CD8-positive, alpha-beta T cell (primary cell): ENCODE measurements at regions of chr11 and their contacts with region 1.

Region 1: DNA sequence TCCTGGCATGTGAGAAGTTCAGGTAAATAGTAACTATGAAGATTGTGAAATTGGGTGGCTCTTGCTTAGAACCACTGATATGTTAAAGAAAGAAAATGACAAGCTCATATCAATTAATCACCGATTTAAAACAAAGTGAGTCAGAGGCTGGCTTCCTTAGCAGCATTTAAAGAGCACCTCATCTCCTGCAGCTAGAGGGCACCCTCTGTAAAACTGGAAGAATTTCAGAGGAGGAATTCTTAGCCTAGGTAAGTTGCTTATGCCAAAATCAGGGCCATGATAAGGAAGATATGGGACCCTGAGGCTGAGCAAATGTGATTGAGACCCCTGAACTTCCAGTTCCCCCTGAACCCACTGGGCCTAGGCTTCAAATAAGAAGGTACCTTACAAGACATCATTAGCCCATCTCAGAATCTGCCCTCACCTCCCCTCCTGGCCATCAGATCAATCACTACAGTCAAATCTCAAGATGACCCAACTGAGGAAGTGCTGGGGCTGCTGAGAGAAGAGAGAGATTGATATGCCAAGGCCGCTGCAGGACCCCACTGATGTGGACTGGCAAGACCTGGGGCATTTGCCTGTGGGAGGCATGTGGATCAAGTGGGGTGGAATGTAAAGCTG is 8.6 kb upstream of the CD3E start:
- DNase-seq: peak in 7 of 9 experiments; percentile 22 to 79 (median 59)
- ATAC-seq: peak; percentile 81
- H3K4me3 ChIP-seq: no peak overlapping the region
- H3K4me3 Mint-ChIP-seq: no peak overlapping the region
- H3K27ac ChIP-seq: peak overlapping the region in 1 of 2 experiments; percentile 52
- H3K27ac Mint-ChIP-seq: peak overlapping the region; percentile 46
- H3K4me1 ChIP-seq: peaks cover 7% of the 10 kb centered on the region
- H3K4me1 Mint-ChIP-seq: peaks cover 27% of the 10 kb centered on the region
- H3K27me3 ChIP-seq: no peaks in the 10 kb centered on the region
- H3K27me3 Mint-ChIP-seq: no peaks in the 10 kb centered on the region
- CTCF ChIP-seq: peak; percentile 64

Region 2: DNA sequence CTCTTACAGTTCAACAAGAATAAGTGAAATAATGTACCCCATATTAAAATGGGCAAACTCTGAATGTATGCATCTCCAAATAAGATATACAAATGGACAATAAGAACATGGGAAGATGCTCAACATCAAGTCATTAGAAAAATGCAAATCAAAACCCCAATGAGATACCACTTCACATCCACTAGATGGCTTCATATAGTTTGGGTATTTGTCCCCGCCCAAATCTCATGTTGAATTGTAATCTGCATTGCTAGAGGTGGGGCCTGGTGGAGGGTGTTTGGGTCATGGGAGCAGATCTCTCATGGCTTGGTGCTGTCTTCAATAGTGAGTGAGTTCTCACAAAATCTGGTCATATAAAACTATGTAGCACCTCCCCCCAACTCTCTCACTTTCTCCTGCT is 37.5 kb before region 1 on chr11:
- CTCF ChIA-PET with region 1: interaction called, 11 read pairs
- POLR2A ChIA-PET with region 1: no interaction called
- intact Hi-C with region 1: loop called (anchors 2 to 5 kb)
- DNase-seq: peak in 1 of 9 experiments; percentile 29
- ATAC-seq: no peak
- H3K4me3 ChIP-seq: no peak overlapping the region
- H3K4me3 Mint-ChIP-seq: no peak overlapping the region
- H3K27ac ChIP-seq: no peak overlapping the region
- H3K27ac Mint-ChIP-seq: no peak overlapping the region
- H3K4me1 ChIP-seq: peaks cover 28% of the 10 kb centered on the region
- H3K4me1 Mint-ChIP-seq: peaks cover 33% of the 10 kb centered on the region
- H3K27me3 ChIP-seq: no peaks in the 10 kb centered on the region
- H3K27me3 Mint-ChIP-seq: no peaks in the 10 kb centered on the region
- CTCF ChIP-seq: no peak

Region 3: GRCh38 chr11:118283756-118284350 is 12.1 kb before region 1 on chr11:
- CTCF ChIA-PET with region 1: interaction called, 22 read pairs
- POLR2A ChIA-PET with region 1: interaction called, 3 read pairs
- intact Hi-C with region 1: no loop called
- DNase-seq: no peak
- ATAC-seq: no peak
- H3K4me3 ChIP-seq: no peak overlapping the region
- H3K4me3 Mint-ChIP-seq: peak overlapping the region; percentile 4
- H3K27ac ChIP-seq: peak overlapping the region in 1 of 2 experiments; percentile 5
- H3K27ac Mint-ChIP-seq: peak overlapping the region; percentile 84
- H3K4me1 ChIP-seq: peaks cover 13% of the 10 kb centered on the region
- H3K4me1 Mint-ChIP-seq: peaks cover 25% of the 10 kb centered on the region
- H3K27me3 ChIP-seq: no peaks in the 10 kb centered on the region
- H3K27me3 Mint-ChIP-seq: no peaks in the 10 kb centered on the region
- CTCF ChIP-seq: no peak

Region 4: DNA sequence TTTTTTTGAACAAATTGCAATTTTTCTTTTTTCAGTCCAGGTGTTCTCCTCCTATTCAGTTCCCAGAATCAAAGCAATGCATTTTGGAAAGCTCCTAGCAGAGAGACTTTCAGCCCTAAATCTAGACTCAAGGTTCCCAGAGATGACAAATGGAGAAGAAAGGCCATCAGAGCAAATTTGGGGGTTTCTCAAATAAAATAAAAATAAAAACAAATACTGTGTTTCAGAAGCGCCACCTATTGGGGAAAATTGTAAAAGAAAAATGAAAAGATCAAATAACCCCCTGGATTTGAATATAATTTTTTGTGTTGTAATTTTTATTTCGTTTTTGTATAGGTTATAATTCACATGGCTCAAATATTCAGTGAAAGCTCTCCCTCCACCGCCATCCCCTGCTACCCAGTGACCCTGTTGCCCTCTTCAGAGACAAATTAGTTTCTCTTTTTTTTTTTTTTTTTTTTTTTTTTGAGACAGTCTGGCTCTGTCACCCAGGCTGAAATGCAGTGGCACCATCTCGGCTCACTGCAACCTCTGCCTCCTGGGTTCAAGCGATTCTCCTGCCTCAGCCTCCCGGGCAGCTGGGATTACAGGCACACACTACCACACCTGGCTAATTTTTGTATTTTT is 57.3 kb after region 1 on chr11:
- CTCF ChIA-PET with region 1: no interaction called
- POLR2A ChIA-PET with region 1: interaction called, 336 read pairs
- intact Hi-C with region 1: loop called (anchors 1 kb)
- DNase-seq: peak in 2 of 9 experiments; percentile 68 to 79
- ATAC-seq: peak; percentile 35
- H3K4me3 ChIP-seq: no peak overlapping the region
- H3K4me3 Mint-ChIP-seq: peak overlapping the region; percentile 43
- H3K27ac ChIP-seq: peak overlapping the region; percentile 13 to 56
- H3K27ac Mint-ChIP-seq: peak overlapping the region; percentile 92
- H3K4me1 ChIP-seq: peaks cover 29% of the 10 kb centered on the region
- H3K4me1 Mint-ChIP-seq: peaks cover 42% of the 10 kb centered on the region
- H3K27me3 ChIP-seq: no peaks in the 10 kb centered on the region
- H3K27me3 Mint-ChIP-seq: no peaks in the 10 kb centered on the region
- CTCF ChIP-seq: peak; percentile 82

Region 5: GRCh38 chr11:118488480-118489109 is 192.7 kb after region 1 on chr11:
- CTCF ChIA-PET with region 1: interaction called, 6 read pairs
- POLR2A ChIA-PET with region 1: no interaction called
- intact Hi-C with region 1: loop called (anchors 1 to 5 kb)
- DNase-seq: peak; percentile 66 to 88 (median 81)
- ATAC-seq: peak; percentile 77
- H3K4me3 ChIP-seq: no peak overlapping the region
- H3K4me3 Mint-ChIP-seq: no peak overlapping the region
- H3K27ac ChIP-seq: no peak overlapping the region
- H3K27ac Mint-ChIP-seq: no peak overlapping the region
- H3K4me1 ChIP-seq: no peaks in the 10 kb centered on the region
- H3K4me1 Mint-ChIP-seq: peaks cover 4% of the 10 kb centered on the region
- H3K27me3 ChIP-seq: no peaks in the 10 kb centered on the region
- H3K27me3 Mint-ChIP-seq: no peaks in the 10 kb centered on the region
- CTCF ChIP-seq: peak; percentile 93

Region 6: DNA sequence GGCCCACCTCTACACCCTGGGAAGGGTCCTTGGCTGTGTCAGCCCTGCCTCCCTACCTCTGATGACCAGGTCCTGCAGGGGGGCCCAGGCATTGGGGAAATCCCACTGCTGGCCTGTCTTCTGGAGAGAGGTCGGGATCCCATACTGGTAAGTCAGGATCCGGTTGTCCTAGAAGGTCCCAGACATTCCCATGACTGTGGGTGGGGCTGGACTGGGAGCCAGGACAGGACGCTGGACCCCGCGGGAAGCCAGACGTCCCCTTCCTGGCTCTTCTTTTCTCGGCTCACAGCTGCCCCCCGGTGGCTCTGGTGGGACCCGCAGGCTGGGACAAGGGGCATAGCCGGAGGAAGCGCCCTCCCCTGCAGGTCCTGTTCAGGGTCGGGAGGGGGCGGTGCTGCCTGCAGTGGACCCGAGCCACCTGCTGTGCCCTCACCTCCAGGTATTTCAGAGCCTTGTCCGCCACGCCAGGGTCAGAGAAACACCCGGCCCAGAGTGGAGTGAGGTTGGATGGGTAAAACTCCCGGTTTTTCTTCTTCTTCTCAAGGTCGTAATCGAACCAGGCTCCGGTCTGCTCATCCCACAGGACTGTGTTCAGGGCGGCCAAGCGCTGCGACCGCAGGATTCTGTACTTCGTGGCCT is 363.5 kb after region 1 on chr11:
- CTCF ChIA-PET with region 1: no interaction called
- POLR2A ChIA-PET with region 1: no interaction called
- intact Hi-C with region 1: no loop called
- DNase-seq: peak; percentile 80 to 92 (median 89)
- ATAC-seq: peak; percentile 100
- H3K4me3 ChIP-seq: no peak overlapping the region
- H3K4me3 Mint-ChIP-seq: no peak overlapping the region
- H3K27ac ChIP-seq: no peak overlapping the region
- H3K27ac Mint-ChIP-seq: no peak overlapping the region
- H3K4me1 ChIP-seq: peaks cover 12% of the 10 kb centered on the region
- H3K4me1 Mint-ChIP-seq: peaks cover 7% of the 10 kb centered on the region
- H3K27me3 ChIP-seq: no peaks in the 10 kb centered on the region
- H3K27me3 Mint-ChIP-seq: peaks cover 3% of the 10 kb centered on the region
- CTCF ChIP-seq: peak; percentile 99